Naive thymus-derived CD4-positive, alpha-beta T cell (primary cell): ENCODE measurements at regions of chr10 and their contacts with region 1.

Region 1: DNA sequence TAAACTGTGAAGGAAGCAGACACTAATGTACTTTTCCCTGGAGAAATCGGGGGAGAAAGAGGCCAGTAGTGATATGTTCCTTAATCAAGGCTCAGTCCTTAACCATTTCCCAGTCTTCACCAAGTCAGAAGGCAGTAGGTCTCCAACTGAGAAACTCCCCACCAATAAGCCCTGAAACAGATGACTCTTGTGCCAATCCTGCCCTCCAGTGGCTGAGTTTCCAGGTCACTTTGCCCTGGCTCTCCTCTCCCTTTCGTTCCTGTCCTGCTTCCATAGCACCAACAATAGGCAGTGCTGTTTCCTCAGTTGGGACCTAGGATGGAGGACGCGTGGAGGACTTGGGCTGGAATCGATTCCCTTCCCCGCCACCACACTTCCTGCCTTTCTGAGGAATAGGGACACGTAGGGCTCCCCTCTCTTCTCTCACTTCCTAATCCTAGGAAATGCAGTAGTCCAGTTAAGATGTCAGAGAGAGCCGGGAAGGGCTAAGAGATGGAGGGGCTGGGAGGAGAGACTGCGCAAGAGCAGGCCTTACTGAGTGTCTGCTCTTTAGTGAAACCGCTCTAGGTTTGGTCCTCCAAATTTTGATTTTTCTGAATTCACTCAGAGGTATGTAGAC is 23.4 kb downstream of the ATOH7 start:
- DNase-seq: no peak
- ATAC-seq: no peak
- H3K4me3 ChIP-seq: no peak overlapping the region
- H3K4me3 Mint-ChIP-seq: no peak overlapping the region
- H3K27ac ChIP-seq: no peak overlapping the region
- H3K27ac Mint-ChIP-seq: peak overlapping the region in 1 of 9 donors; percentile 22
- H3K4me1 ChIP-seq: no peaks in the 10 kb centered on the region
- H3K4me1 Mint-ChIP-seq: peaks cover 0 to 4% (median 0%) of the 10 kb centered on the region in 7 donors
- H3K27me3 ChIP-seq: no peaks in the 10 kb centered on the region
- H3K27me3 Mint-ChIP-seq: peaks cover 0 to 36% (median 10%) of the 10 kb centered on the region in 5 donors

Region 2: DNA sequence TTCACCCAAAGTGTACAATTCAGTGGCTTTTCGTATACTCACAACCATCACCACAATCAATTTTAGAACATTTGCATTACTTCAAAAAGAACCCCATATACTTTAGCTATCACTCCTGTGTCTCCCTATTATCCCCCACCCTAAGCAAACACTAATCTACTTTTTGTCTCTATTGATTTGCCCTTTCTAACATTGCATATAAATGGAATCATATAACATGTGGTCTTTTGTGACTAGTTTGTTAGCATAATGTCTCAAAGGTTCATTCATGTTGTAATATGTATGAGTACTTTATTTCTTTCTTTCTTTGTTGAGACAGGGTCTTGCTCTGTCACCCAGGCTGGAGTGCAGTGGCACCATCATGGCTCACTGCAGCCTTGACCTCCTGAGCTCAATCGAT is 349.6 kb before region 1 on chr10:
- CTCF ChIA-PET with region 1: interaction called, 4 read pairs
- POLR2A ChIA-PET with region 1: no interaction called
- intact Hi-C with region 1: loop called (anchors 2 to 5 kb)
- DNase-seq: no peak
- ATAC-seq: no peak
- H3K4me3 ChIP-seq: no peak overlapping the region
- H3K4me3 Mint-ChIP-seq: no peak overlapping the region
- H3K27ac ChIP-seq: no peak overlapping the region
- H3K27ac Mint-ChIP-seq: no peak overlapping the region
- H3K4me1 ChIP-seq: no peaks in the 10 kb centered on the region
- H3K4me1 Mint-ChIP-seq: peaks cover 0 to 12% (median 5%) of the 10 kb centered on the region in 7 donors
- H3K27me3 ChIP-seq: no peaks in the 10 kb centered on the region
- H3K27me3 Mint-ChIP-seq: peaks cover 0 to 5% (median 0%) of the 10 kb centered on the region in 5 donors

Region 3: GRCh38 chr10:68301790-68302502 is 93.4 kb after region 1 on chr10:
- CTCF ChIA-PET with region 1: interaction called, 7 read pairs
- POLR2A ChIA-PET with region 1: no interaction called
- intact Hi-C with region 1: loop called (anchors 1 kb)
- DNase-seq: peak in 5 of 9 donors; percentile 12 to 38 (median 24)
- ATAC-seq: peak; percentile 66
- H3K4me3 ChIP-seq: no peak overlapping the region
- H3K4me3 Mint-ChIP-seq: no peak overlapping the region
- H3K27ac ChIP-seq: no peak overlapping the region
- H3K27ac Mint-ChIP-seq: no peak overlapping the region
- H3K4me1 ChIP-seq: no peaks in the 10 kb centered on the region
- H3K4me1 Mint-ChIP-seq: peaks cover 0 to 4% (median 0%) of the 10 kb centered on the region in 7 donors
- H3K27me3 ChIP-seq: no peaks in the 10 kb centered on the region
- H3K27me3 Mint-ChIP-seq: no peaks in the 10 kb centered on the region

Region 4: DNA sequence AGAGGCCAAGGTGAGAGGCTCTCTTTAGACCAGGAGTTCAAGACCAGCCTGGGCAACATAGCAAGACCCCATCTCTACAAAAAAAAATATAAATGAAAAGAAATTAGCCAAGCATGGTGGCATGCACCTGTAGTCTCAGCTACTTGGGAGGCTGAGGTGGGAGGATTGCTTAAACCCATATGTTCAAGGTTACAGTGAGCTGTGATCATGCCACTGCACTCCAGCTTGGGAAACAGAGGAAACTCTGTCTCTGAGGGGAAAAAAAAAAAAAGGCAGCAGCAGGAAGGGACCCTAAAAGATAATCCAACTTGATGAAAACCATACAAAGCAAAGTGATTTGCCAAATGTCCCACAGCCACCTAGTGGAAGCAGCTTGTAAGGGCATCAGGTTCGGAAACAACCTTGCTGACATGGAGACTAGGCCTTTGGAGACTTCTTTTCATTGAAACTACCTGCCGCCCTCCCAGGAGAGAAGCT is 139.8 kb after region 1 on chr10:
- CTCF ChIA-PET with region 1: interaction called, 15 read pairs
- POLR2A ChIA-PET with region 1: interaction called, 3 read pairs
- intact Hi-C with region 1: loop called (anchors 1 kb)
- DNase-seq: peak in 8 of 9 donors; percentile 30 to 53 (median 44)
- ATAC-seq: peak; percentile 81
- H3K4me3 ChIP-seq: no peak overlapping the region
- H3K4me3 Mint-ChIP-seq: no peak overlapping the region
- H3K27ac ChIP-seq: peak overlapping the region; percentile 15
- H3K27ac Mint-ChIP-seq: peak overlapping the region in 8 of 9 donors; percentile 31 to 90 (median 81)
- H3K4me1 ChIP-seq: no peaks in the 10 kb centered on the region
- H3K4me1 Mint-ChIP-seq: peaks cover 0 to 13% (median 4%) of the 10 kb centered on the region in 7 donors
- H3K27me3 ChIP-seq: no peaks in the 10 kb centered on the region
- H3K27me3 Mint-ChIP-seq: no peaks in the 10 kb centered on the region